Activated naive CD4-positive, alpha-beta T cell treated with anti-CD3 and anti-CD28 coated beads, Interleukin-2, amount 10 ng/mL, durations not matched to agents 7 days and 5 days (primary cell): ENCODE measurements at regions of chr17 and their contacts with region 1.

Region 1: GRCh38 chr17:67376737-67377487 is at the start of gene PITPNC1:
- DNase-seq: peak; percentile 92
- H3K4me3 Mint-ChIP-seq: peak within 1 kb of the TSS; percentile 87
- H3K27ac Mint-ChIP-seq: peak within 1 kb of the TSS; percentile 96
- H3K4me1 Mint-ChIP-seq: peaks cover 46% of the 10 kb centered on the region
- H3K27me3 Mint-ChIP-seq: no peaks in the 10 kb centered on the region

Region 2: GRCh38 chr17:67260170-67261011 is 116.5 kb before region 1 on chr17:
- CTCF ChIA-PET with region 1: no interaction called
- DNase-seq: no peak
- H3K4me3 Mint-ChIP-seq: no peak overlapping the region
- H3K27ac Mint-ChIP-seq: peak overlapping the region; percentile 37
- H3K4me1 Mint-ChIP-seq: peaks cover 45% of the 10 kb centered on the region
- H3K27me3 Mint-ChIP-seq: peaks cover 5% of the 10 kb centered on the region

Region 3: DNA sequence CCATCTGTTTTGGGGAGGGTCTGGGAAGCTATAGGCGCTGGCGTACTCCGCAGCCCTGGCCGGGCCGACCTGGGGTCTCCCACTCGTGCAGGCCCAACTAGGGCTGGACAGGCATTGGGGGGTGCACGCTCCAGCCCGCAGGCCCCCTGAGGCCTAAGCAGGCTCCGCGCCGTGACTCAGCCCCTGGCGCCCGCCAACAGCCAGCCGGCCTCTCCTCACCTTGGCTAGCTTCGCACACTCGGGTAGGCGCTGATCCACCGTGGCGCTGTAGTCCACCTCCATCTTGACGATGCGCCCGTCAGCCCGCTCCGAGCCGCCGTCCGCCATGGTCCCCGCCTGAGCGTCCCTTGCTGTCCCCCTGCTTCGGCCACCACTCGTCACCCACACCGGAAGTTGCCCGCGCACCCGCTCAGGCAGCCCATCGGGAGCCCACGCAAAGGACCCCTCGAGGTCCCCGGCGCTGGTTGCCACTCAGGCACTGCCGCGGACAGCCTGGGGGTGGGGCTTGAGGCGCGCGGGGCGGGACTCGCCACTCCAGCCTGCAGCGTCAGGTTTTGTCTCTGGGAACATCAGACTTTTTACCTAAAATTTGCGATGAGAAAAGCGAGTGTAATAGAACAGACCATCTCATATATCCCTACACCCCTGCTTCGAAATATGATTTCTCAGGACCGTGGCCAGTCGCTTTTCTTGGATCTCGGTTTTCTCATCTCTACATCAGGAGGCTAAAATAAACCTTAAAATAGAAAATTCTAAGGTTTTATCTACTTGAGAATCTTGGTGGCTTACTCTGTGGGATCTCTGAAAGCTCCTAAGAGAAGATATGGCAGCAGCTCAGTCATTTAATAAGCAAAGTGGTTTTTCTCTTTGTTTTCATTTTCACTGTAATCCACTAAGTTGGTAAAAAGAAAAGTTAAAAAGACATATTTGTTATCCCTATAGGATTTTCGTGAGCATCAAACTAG is 10.4 kb before region 1 on chr17 and contains the start of gene PSMD12:
- CTCF ChIA-PET with region 1: interaction called, 33 read pairs
- DNase-seq: peak; percentile 94
- H3K4me3 Mint-ChIP-seq: peak within 1 kb of the TSS; percentile 96
- H3K27ac Mint-ChIP-seq: peak within 1 kb of the TSS; percentile 92
- H3K4me1 Mint-ChIP-seq: peaks cover 52% of the 10 kb centered on the region
- H3K27me3 Mint-ChIP-seq: no peaks in the 10 kb centered on the region

Region 4: GRCh38 chr17:67441052-67441927 is 64.4 kb after region 1 on chr17:
- CTCF ChIA-PET with region 1: interaction called, 20 read pairs
- DNase-seq: peak; percentile 80
- H3K4me3 Mint-ChIP-seq: peak overlapping the region; percentile 77
- H3K27ac Mint-ChIP-seq: peak overlapping the region; percentile 100
- H3K4me1 Mint-ChIP-seq: peaks cover 82% of the 10 kb centered on the region
- H3K27me3 Mint-ChIP-seq: no peaks in the 10 kb centered on the region

Region 5: DNA sequence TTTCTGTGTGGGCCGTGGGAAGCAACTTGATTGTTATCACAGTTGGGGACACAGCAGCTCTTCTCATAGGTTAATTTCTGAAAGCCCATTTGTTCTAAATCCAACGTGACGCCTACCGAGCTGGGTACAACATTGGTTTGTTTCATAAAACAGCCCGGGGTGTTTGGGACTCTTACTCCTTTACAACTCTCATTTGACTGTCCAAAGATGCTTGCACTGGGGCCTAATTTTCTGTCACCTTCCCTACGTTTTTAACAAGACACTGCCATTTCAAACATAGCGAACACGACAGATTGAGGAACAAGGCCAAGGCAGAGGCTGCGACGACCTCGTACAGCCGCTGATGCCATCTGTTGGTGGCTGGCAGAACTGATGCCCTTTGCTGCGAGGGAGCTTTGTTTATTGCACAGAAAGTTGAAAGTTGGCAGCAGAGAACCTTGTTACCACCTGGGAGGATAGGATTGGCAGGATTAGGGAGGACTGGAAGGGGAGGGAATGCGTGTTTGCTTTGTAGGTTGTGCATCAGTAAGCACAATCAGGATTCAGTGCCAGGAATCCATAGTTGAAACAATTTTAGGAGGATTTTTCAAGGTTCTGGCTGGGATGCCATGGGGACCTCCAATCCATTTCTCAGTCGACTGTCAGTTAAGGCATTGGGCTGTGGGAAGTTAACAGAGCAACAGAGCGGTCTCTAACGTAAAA is 98.5 kb after region 1 on chr17:
- CTCF ChIA-PET with region 1: interaction called, 161 read pairs
- DNase-seq: peak; percentile 90
- H3K4me3 Mint-ChIP-seq: peak overlapping the region; percentile 68
- H3K27ac Mint-ChIP-seq: peak overlapping the region; percentile 95
- H3K4me1 Mint-ChIP-seq: peaks cover 72% of the 10 kb centered on the region
- H3K27me3 Mint-ChIP-seq: no peaks in the 10 kb centered on the region

Region 6: DNA sequence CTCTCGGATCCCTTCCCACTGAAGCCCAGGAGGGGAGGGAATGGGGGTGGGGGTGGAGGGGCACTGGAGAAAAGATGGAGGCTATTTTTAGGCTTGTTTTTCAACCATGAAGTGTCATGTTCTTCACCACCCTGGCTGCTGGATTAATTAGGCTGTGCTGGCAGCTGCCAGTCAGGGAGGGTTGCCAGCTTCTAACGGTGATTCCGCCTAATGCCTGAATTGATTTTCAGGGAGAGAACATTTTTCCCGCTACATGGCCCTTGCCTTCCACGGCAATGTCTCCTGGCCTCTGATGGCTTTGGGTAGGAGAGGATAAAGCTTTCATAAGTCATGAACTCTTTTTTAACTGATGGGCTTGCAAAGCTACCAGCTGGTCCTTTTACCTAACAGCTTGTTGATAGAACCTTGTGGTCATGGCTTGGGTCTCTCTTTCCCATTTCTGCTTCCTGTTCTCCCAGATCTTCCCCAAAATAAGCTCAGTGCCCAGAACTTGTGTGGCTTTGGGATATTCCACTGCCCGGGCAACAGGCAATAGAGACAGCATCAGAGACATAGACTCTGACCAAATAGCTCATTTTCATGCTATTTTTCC is 167.5 kb after region 1 on chr17:
- CTCF ChIA-PET with region 1: no interaction called
- DNase-seq: no peak
- H3K4me3 Mint-ChIP-seq: no peak overlapping the region
- H3K27ac Mint-ChIP-seq: no peak overlapping the region
- H3K4me1 Mint-ChIP-seq: peaks cover 8% of the 10 kb centered on the region
- H3K27me3 Mint-ChIP-seq: no peaks in the 10 kb centered on the region

Region 7: GRCh38 chr17:67629971-67630320 is 253.0 kb after region 1 on chr17:
- CTCF ChIA-PET with region 1: interaction called, 12 read pairs
- DNase-seq: no peak
- H3K4me3 Mint-ChIP-seq: no peak overlapping the region
- H3K27ac Mint-ChIP-seq: no peak overlapping the region
- H3K4me1 Mint-ChIP-seq: no peaks in the 10 kb centered on the region
- H3K27me3 Mint-ChIP-seq: no peaks in the 10 kb centered on the region